ENCODE measurements at regions of chr9 and their contacts with region 1.

Region 1: DNA sequence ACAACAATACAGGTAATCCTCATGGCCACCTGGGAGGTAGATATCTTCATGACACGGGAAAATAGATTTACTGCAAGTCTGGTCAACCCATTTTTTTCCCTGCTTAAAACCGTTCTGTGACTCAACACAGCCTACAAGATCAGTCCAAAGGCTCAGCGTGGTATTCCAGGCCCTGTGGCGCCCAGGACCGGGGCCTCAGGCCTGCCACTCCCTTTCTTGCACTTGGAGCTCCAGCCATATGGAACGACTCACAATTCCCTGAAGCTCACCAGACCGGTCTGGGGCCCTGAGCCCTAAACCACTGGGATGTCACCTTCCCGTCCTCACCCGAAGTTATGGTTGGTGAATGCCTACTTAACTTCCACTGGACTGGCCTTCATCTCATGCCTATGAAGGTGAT is 6.5 kb upstream of the MLANA start:
- DNase-seq: no peak
- H3K4me3 ChIP-seq: no peak overlapping the region
- H3K27ac ChIP-seq: no peak overlapping the region
- H3K4me1 ChIP-seq: no peaks in the 10 kb centered on the region
- H3K27me3 ChIP-seq: no peaks in the 10 kb centered on the region
- CTCF ChIP-seq: no peak
- EP300 ChIP-seq: no peak
- POLR2A ChIP-seq: no peak

Region 2: GRCh38 chr9:6055213-6055612 is 171.0 kb after region 1 on chr9:
- intact Hi-C with region 1: loop called (anchors 2 kb)
- DNase-seq: no peak
- H3K4me3 ChIP-seq: no peak overlapping the region
- H3K27ac ChIP-seq: no peak overlapping the region
- H3K4me1 ChIP-seq: no peaks in the 10 kb centered on the region
- H3K27me3 ChIP-seq: no peaks in the 10 kb centered on the region
- CTCF ChIP-seq: peak; percentile 43 to 54 (median 50)
- EP300 ChIP-seq: no peak
- POLR2A ChIP-seq: no peak

Measured in esophagus muscularis mucosa (tissue), 4 donors.